Sciatic nerve (tissue), 2 donors: ENCODE measurements at regions of chr7 and their contacts with region 1.

Region 1: DNA sequence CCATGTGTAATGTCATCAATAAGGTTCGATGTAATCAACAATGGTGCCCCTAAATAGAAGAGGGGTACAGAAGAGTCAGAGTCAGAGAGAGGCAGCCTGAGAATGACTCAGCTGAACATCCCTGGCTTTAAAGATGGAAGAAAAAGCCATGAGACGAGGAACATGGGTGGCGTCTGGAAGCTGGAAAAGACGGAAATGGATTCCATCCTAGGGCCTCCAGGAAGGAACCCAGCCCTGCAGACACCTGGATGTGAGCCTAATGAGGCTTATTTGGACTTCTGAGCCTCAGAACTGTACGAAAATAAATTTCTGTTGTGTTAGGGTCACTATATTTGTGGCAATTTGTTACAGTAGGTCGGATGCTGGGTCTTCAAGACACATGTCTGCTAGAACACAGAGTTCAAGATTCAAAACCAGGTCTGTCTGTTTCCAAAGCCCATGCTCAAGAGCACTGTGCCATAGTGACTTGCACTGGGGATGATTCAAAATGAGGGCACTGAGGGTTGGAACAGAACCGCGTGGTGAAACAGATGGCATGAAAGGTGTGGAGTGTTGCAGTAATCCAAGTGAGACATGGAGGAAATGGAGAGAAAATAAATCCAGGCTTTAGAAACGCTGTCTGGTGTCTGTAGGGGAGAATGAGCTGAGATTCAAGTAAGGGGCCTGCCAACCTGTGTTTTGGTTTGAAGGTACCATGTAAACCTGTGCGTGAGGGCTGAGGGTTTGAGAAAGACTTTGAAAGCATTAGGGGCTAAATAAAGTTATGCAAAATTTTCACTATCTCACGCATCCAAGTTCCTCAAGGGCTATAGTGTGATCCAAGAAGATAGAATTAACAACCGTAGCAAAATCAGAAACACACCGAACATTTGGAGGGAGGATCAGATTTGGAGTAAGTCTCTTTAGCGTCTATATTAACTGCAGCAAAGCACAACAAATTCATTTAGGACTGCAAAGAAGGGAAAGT is 849.1 kb upstream of the AUTS2 start:
- DNase-seq: no peak
- ATAC-seq: no peak

Region 2: DNA sequence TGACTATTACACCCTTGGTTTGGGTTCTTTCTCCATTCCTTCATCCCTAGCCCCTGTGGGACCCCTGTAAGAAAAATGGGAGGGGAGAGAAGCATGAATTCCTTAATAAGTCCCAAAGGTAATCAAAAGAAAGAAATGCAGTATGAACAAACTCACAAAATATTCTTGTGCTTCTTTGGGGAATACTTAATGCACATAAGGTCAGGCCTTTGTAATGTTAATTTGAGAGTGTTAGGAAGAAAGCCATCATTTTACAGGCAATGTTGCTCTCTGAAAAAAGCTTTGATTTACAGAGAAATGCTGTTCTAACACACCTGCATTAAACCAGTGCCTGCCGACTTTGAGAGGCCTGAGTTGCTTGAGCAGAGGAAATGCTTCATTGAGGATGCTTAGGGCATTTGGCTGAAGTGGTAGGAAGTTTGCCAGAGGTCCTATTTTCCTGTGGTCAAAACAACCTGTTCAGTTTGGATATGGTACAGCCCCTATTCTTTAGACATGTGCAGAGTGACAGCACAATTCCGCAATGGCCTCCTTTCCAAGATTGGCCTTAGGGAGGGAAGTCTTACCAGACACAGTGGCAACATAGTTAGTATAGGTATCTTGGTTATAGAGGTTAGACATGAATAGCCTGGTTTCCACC is 1492.4 kb after region 1 on chr7:
- intact Hi-C with region 1: loop called (anchors 5 kb)
- DNase-seq: no peak
- ATAC-seq: no peak